Naive thymus-derived CD4-positive, alpha-beta T cell (primary cell): ENCODE measurements at regions of chr5 and their contacts with region 1.

Region 1: DNA sequence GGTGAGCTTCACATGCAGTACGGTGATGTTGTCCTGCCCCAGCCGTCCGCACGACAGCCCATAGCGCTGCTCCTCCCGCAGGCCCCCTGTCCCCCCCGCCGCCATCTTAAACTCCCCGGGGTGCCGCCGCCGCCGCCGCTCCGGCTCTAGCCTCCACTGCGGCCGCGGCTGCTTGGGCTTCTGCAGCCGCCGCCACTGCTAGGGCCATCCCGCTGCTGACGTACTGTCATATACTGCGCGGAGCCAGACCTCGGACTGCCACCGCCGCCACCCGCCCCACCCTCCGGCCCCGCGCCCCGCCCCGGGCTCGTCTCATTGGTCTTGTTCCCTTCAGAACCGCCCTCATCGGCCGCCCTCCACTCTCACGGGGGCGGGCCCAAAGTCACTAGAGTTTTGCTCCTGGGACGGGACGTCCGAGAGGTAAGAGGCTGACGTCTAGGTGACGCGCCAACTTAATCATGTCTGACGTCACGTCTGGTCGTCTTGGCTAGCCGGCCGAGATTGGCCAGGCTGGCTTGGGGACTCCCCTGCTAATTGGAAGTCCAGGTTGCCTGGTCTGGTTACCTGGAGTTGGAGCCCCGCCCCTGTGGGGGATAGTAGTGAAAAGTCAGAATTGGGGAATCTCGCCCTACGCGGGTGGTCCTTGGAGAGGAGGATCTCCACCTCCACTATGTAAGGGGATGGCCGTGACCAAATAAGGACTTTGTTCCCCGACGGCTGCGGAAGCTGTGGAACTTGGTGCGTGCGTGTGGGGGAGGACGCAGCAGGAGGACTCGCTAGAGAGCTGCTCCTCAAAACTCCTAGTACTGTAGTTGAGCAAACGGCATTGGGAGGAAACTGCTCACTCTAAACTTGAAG is at the start of gene ELL2:
- DNase-seq: peak; percentile 85 to 98 (median 90)
- ATAC-seq: peak; percentile 93
- H3K4me3 ChIP-seq: peak within 1 kb of the TSS; percentile 73
- H3K4me3 Mint-ChIP-seq: peak within 1 kb of the TSS; percentile 94 to 99 (median 96)
- H3K27ac ChIP-seq: peak within 1 kb of the TSS; percentile 90
- H3K27ac Mint-ChIP-seq: peak within 1 kb of the TSS; percentile 87 to 99 (median 98)
- H3K4me1 ChIP-seq: peaks cover 12 to 13% of the 10 kb centered on the region in 2 donors
- H3K4me1 Mint-ChIP-seq: peaks cover 30 to 43% (median 34%) of the 10 kb centered on the region in 7 donors
- H3K27me3 ChIP-seq: no peaks in the 10 kb centered on the region
- H3K27me3 Mint-ChIP-seq: peaks cover 0 to 3% (median 0%) of the 10 kb centered on the region in 5 donors
- total RNA-seq, gene ELL2: 12.6 to 65.8 (median 41.3) TPM

Region 2: DNA sequence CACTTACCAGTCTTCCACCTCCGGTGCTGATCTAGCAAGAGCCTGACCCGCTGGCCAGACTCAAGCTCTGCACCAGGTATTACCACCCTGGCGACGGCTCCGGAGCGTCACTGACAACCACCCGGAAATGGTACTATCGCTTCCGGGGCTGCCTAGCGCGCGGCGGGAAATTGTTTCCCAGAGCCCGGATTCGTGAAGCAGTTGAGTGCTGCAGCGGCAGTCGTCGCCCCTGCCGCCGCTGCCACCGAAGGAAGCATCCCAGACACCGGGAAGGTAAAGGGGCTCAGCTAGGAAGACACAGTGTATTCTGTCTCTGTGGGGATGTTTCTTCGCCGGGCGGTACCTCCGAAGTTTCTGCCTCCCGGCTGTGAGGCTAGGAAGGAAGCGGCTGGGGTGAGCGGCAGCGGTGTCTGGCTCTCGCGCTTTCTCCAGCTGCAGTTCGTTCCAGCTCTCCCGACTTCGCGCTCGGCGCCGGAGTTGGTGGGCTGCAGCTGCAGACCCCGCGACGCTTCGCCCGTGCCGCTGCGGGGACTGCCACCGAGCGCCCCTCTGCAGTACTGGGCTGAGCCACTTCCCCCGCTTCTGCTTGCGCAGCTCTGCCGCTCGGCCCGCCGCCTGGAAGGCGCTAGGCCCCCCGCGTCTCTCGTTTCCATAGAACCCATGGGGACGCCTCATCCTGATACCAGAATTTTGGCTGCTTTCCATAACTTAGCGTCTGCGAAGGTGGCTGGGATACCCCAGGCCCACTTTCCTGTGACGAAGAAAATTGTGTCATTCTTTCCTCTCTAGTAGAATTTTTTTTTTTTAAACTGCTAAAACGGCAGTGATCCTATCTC is 1343.1 kb before region 1 on chr5 and contains the starts of genes KIAA0825 and SLF1:
- CTCF ChIA-PET with region 1: no interaction called
- POLR2A ChIA-PET with region 1: no interaction called
- intact Hi-C with region 1: loop called (anchors 5 to 10 kb)
- DNase-seq: peak; percentile 69 to 86 (median 83)
- ATAC-seq: peak; percentile 94
- H3K4me3 ChIP-seq: peak within 1 kb of the TSS; percentile 79
- H3K4me3 Mint-ChIP-seq: peak within 1 kb of the TSS; percentile 92 to 99 (median 96)
- H3K27ac ChIP-seq: peak within 1 kb of the TSS; percentile 63
- H3K27ac Mint-ChIP-seq: peak within 1 kb of the TSS; percentile 30 to 96 (median 89)
- H3K4me1 ChIP-seq: peaks cover 6 to 10% of the 10 kb centered on the region in 2 donors
- H3K4me1 Mint-ChIP-seq: peaks cover 18 to 47% (median 43%) of the 10 kb centered on the region in 7 donors
- H3K27me3 ChIP-seq: no peaks in the 10 kb centered on the region
- H3K27me3 Mint-ChIP-seq: no peaks in the 10 kb centered on the region
- total RNA-seq, gene KIAA0825: 1.2 to 3.2 (median 1.5) TPM
- total RNA-seq, gene SLF1: 6.7 to 13.4 (median 11.3) TPM

Region 3: GRCh38 chr5:95646554-95647431 is 315.1 kb before region 1 on chr5 and contains the start of gene RFESD:
- CTCF ChIA-PET with region 1: interaction called, 5 read pairs
- POLR2A ChIA-PET with region 1: no interaction called
- intact Hi-C with region 1: loop called (anchors 2 kb)
- DNase-seq: peak; percentile 84 to 94 (median 90)
- ATAC-seq: peak; percentile 98
- H3K4me3 ChIP-seq: peak within 1 kb of the TSS; percentile 80
- H3K4me3 Mint-ChIP-seq: peak within 1 kb of the TSS; percentile 84 to 93 (median 88)
- H3K27ac ChIP-seq: peak within 1 kb of the TSS; percentile 80
- H3K27ac Mint-ChIP-seq: peak within 1 kb of the TSS; percentile 71 to 95 (median 89)
- H3K4me1 ChIP-seq: peaks cover 0 to 18% of the 10 kb centered on the region in 2 donors
- H3K4me1 Mint-ChIP-seq: peaks cover 7 to 53% (median 40%) of the 10 kb centered on the region in 7 donors
- H3K27me3 ChIP-seq: no peaks in the 10 kb centered on the region
- H3K27me3 Mint-ChIP-seq: no peaks in the 10 kb centered on the region
- total RNA-seq, gene RFESD: 2.2 to 9.2 (median 6.5) TPM

Region 4: GRCh38 chr5:95870105-95870672 is 91.7 kb before region 1 on chr5:
- CTCF ChIA-PET with region 1: interaction called, 3 read pairs
- POLR2A ChIA-PET with region 1: no interaction called
- intact Hi-C with region 1: loop called in 1 of 2 experiments (anchors 1 kb)
- DNase-seq: peak in 1 of 9 donors; percentile 54
- ATAC-seq: peak; percentile 41
- H3K4me3 ChIP-seq: no peak overlapping the region
- H3K4me3 Mint-ChIP-seq: peak overlapping the region; percentile 14 to 83 (median 60)
- H3K27ac ChIP-seq: no peak overlapping the region
- H3K27ac Mint-ChIP-seq: peak overlapping the region; percentile 12 to 94 (median 59)
- H3K4me1 ChIP-seq: peaks cover 19 to 21% of the 10 kb centered on the region in 2 donors
- H3K4me1 Mint-ChIP-seq: peaks cover 26 to 41% (median 40%) of the 10 kb centered on the region in 7 donors
- H3K27me3 ChIP-seq: no peaks in the 10 kb centered on the region
- H3K27me3 Mint-ChIP-seq: no peaks in the 10 kb centered on the region

Region 5: DNA sequence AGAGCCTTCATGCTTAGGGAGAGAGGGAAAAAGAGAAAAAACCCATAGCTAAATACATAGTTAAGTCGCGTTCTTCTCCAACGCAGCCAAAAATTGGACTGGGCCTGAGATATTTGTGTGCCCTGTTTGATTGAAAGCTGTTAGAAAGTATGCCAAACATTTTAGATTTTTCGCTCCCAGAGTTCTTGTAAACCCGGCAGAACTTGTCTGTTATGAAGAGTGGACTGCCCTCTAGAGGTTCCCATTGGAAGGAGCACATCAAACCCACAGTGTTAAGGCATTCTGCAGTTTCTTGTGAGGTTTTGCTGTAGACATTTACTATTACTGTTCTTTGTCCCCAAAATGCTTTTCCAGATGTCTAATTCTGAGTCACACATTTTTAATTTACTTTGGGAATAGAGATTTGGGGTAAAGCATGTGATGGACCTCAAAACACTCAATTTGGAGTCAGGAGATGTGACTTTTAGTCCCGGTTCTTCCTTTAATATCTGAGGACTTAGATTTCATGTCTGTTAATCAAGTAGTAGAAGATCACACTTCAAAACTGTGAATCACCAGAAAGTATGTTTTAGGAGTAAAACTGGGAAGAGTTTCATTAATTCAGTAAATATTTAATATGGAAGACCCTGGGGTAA is 374.6 kb after region 1 on chr5:
- CTCF ChIA-PET with region 1: interaction called, 3 read pairs
- POLR2A ChIA-PET with region 1: no interaction called
- intact Hi-C with region 1: loop called (anchors 1 kb)
- DNase-seq: peak in 8 of 9 donors; percentile 41 to 72 (median 65)
- ATAC-seq: peak; percentile 92
- H3K4me3 ChIP-seq: no peak overlapping the region
- H3K4me3 Mint-ChIP-seq: no peak overlapping the region
- H3K27ac ChIP-seq: no peak overlapping the region
- H3K27ac Mint-ChIP-seq: no peak overlapping the region
- H3K4me1 ChIP-seq: no peaks in the 10 kb centered on the region
- H3K4me1 Mint-ChIP-seq: peaks cover 0 to 9% (median 0%) of the 10 kb centered on the region in 7 donors
- H3K27me3 ChIP-seq: no peaks in the 10 kb centered on the region
- H3K27me3 Mint-ChIP-seq: peaks cover 7 to 26% (median 14%) of the 10 kb centered on the region in 5 donors

Region 6: GRCh38 chr5:96662725-96663513 is 701.1 kb after region 1 on chr5:
- CTCF ChIA-PET with region 1: no interaction called
- POLR2A ChIA-PET with region 1: no interaction called
- intact Hi-C with region 1: loop called (anchors 1 to 2 kb)
- DNase-seq: peak; percentile 72 to 90 (median 82)
- ATAC-seq: peak; percentile 84
- H3K4me3 ChIP-seq: peak overlapping the region; percentile 86
- H3K4me3 Mint-ChIP-seq: peak overlapping the region; percentile 86 to 100 (median 95)
- H3K27ac ChIP-seq: peak overlapping the region; percentile 87
- H3K27ac Mint-ChIP-seq: peak overlapping the region; percentile 76 to 99 (median 95)
- H3K4me1 ChIP-seq: peaks cover 20 to 26% of the 10 kb centered on the region in 2 donors
- H3K4me1 Mint-ChIP-seq: peaks cover 30 to 64% (median 50%) of the 10 kb centered on the region in 7 donors
- H3K27me3 ChIP-seq: no peaks in the 10 kb centered on the region
- H3K27me3 Mint-ChIP-seq: peaks cover 0 to 14% (median 0%) of the 10 kb centered on the region in 5 donors

Region 7: DNA sequence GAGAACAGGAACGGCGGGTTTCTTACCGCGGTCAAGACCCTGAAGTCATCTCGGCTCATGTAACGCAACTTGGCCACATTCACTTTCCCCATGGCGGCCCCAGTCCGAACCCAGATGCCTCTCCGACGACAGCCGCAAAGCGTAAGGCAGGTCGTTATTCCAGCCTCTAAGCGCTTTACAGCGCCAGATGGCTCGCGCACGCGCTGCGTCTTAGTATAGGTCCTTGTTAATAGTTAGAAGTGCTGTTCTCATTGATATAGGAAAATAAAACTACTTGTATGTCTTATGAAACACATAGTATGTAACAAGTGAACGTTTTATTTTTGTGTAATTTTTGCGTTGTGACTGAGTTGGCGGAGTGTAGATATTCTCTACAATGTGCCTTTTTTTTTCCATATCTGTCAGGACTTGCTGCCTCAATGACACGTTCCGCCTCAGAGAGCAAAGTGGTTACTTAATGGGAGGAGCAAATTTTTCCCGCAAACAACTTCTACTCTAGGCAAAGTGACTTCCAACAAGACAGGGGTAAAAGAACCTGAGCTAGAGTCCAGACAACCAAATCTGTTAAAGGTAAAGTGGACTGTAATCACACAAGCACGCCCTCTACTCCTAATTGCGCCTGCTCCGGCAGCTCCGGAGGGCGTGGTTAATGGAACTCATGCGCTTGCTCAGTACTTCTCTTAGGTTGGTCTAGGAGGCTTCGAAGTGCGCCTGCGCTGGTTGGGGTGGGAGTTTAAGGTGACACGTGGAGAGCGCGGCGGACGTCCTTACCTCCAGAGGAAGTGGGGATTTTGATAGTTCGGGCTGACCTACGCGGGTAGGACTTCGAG is 1221.5 kb after region 1 on chr5 and contains the start of gene RIOK2:
- CTCF ChIA-PET with region 1: no interaction called
- POLR2A ChIA-PET with region 1: no interaction called
- intact Hi-C with region 1: loop called (anchors 1 to 5 kb)
- DNase-seq: peak; percentile 77 to 93 (median 91)
- ATAC-seq: peak; percentile 96
- H3K4me3 ChIP-seq: peak within 1 kb of the TSS; percentile 82
- H3K4me3 Mint-ChIP-seq: peak within 1 kb of the TSS; percentile 89 to 98 (median 94)
- H3K27ac ChIP-seq: peak within 1 kb of the TSS; percentile 94
- H3K27ac Mint-ChIP-seq: peak within 1 kb of the TSS; percentile 99 to 100 (median 100)
- H3K4me1 ChIP-seq: peaks cover 4 to 14% of the 10 kb centered on the region in 2 donors
- H3K4me1 Mint-ChIP-seq: peaks cover 23 to 54% (median 44%) of the 10 kb centered on the region in 7 donors
- H3K27me3 ChIP-seq: no peaks in the 10 kb centered on the region
- H3K27me3 Mint-ChIP-seq: peaks cover 0 to 3% (median 0%) of the 10 kb centered on the region in 5 donors
- total RNA-seq, gene RIOK2: 18.8 to 36.0 (median 28.5) TPM